ENCODE measurements at regions of chr10 and their contacts with region 1.

Region 1: DNA sequence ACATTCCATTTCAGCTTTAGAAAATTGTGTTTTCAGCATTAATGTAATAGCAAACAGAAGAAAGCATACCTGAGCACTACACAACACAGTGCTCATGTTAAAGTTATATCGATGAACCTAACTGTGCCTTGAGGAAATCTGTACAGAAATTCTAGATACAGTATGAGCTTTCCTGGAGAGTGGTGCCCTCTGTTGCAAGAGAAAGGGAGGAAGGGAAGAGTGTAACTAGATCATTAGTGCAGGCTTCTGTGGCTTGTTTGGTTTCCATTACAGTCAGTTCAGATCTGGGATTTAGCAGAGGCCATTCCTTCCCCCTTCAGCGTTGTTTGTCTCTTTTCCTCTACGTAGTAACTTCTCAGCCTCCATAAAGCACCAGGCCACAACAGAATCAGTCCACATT is 139.7 kb downstream of the HTR7 start:
- DNase-seq: no peak
- H3K4me3 ChIP-seq: no peak overlapping the region
- H3K27ac ChIP-seq: no peak overlapping the region
- H3K4me1 ChIP-seq: no peaks in the 10 kb centered on the region
- H3K27me3 ChIP-seq: no peaks in the 10 kb centered on the region
- CTCF ChIP-seq: no peak
- POLR2A ChIP-seq: no peak

Region 2: GRCh38 chr10:91953600-91954160 is 1235.5 kb after region 1 on chr10:
- intact Hi-C with region 1: loop called (anchors 10 kb)
- DNase-seq: no peak
- H3K4me3 ChIP-seq: no peak overlapping the region
- H3K27ac ChIP-seq: no peak overlapping the region
- H3K4me1 ChIP-seq: no peaks in the 10 kb centered on the region
- H3K27me3 ChIP-seq: no peaks in the 10 kb centered on the region
- CTCF ChIP-seq: no peak
- POLR2A ChIP-seq: no peak